OCI-LY7 (cell line): ENCODE measurements at regions of chr22 and their contacts with region 1.

Region 1: DNA sequence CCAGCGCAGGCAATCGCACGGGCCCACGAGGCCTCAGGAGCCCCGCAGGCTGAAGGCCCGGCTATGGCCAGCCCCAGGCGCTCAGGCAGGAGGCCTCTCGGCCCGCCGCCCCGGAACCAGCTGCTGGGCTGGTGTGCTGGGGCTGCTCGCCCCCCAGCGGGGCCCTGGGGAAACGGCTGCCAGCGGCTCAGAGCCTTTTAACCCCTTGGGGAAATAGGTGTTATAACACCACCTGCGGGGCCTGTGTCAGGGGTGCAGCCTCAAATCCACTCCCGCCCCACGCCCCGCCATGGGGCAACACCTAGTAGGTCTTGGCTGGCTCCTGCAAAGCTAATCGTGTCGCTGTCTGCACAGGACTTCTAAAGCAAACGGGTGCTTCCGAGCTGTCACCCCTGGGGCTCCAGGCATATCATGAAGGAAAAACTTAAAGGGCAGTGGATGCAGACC is 237.4 kb downstream of the TTC28 start:
- DNase-seq: peak; percentile 63
- H3K4me3 ChIP-seq: no peak overlapping the region
- H3K27ac ChIP-seq: no peak overlapping the region
- H3K4me1 ChIP-seq: no peaks in the 10 kb centered on the region
- CTCF ChIP-seq: peak; percentile 76

Region 2: GRCh38 chr22:28019881-28020871 is 422.1 kb before region 1 on chr22:
- CTCF ChIA-PET with region 1: no interaction called
- POLR2A ChIA-PET with region 1: no interaction called
- intact Hi-C with region 1: loop called (anchors 5 kb)
- DNase-seq: peak; percentile 71
- H3K4me3 ChIP-seq: no peak overlapping the region
- H3K27ac ChIP-seq: no peak overlapping the region
- H3K4me1 ChIP-seq: peaks cover under 1% of the 10 kb centered on the region
- CTCF ChIP-seq: peak; percentile 97